BJ (cell line): ENCODE measurements at regions of chr9 and their contacts with region 1.

Region 1: GRCh38 chr9:77884395-77884851 is 147.2 kb downstream of the GNAQ start:
- DNase-seq: no peak
- H3K4me3 ChIP-seq: no peak overlapping the region
- H3K27me3 ChIP-seq: no peaks in the 10 kb centered on the region
- CTCF ChIP-seq: no peak

Region 2: GRCh38 chr9:77896938-77897667 is 12.7 kb after region 1 on chr9:
- CTCF ChIA-PET with region 1: interaction called, 11 read pairs
- POLR2A ChIA-PET with region 1: no interaction called
- DNase-seq: no peak
- H3K4me3 ChIP-seq: no peak overlapping the region
- H3K27me3 ChIP-seq: no peaks in the 10 kb centered on the region
- CTCF ChIP-seq: peak; percentile 15; the same call in 1 of the 2 replicates

Region 3: GRCh38 chr9:77909306-77909705 is 24.9 kb after region 1 on chr9:
- CTCF ChIA-PET with region 1: no interaction called
- POLR2A ChIA-PET with region 1: no interaction called
- DNase-seq: no peak
- H3K4me3 ChIP-seq: no peak overlapping the region
- H3K27me3 ChIP-seq: no peaks in the 10 kb centered on the region
- CTCF ChIP-seq: no peak